ENCODE measurements at regions of chr15 and their contacts with region 1.

Region 1: GRCh38 chr15:98442379-98442833 is 205.9 kb upstream of the IGF1R start:
- DNase-seq: peak; percentile 64 to 83
- H3K4me3 ChIP-seq: no peak overlapping the region
- H3K4me1 ChIP-seq: peaks cover 4% of the 10 kb centered on the region
- H3K27me3 ChIP-seq: peaks cover 6% of the 10 kb centered on the region; the same call in 1 of the 2 replicates

Region 2: GRCh38 chr15:99068186-99068585 is 625.8 kb after region 1 on chr15:
- in situ Hi-C with region 1: loop called (anchors 10 kb)
- DNase-seq: no peak
- H3K4me3 ChIP-seq: no peak overlapping the region
- H3K4me1 ChIP-seq: no peaks in the 10 kb centered on the region; the same call in 1 of the 2 replicates
- H3K27me3 ChIP-seq: no peaks in the 10 kb centered on the region

Measured in HAP-1 (cell line).